AG04449 (cell line): ENCODE measurements at regions of chr11 and their contacts with region 1.

Region 1: GRCh38 chr11:33857933-33858371 is 33.9 kb downstream of the LMO2 start:
- DNase-seq: no peak
- H3K4me3 ChIP-seq: no peak overlapping the region
- CTCF ChIP-seq: peak; percentile 90

Region 2: DNA sequence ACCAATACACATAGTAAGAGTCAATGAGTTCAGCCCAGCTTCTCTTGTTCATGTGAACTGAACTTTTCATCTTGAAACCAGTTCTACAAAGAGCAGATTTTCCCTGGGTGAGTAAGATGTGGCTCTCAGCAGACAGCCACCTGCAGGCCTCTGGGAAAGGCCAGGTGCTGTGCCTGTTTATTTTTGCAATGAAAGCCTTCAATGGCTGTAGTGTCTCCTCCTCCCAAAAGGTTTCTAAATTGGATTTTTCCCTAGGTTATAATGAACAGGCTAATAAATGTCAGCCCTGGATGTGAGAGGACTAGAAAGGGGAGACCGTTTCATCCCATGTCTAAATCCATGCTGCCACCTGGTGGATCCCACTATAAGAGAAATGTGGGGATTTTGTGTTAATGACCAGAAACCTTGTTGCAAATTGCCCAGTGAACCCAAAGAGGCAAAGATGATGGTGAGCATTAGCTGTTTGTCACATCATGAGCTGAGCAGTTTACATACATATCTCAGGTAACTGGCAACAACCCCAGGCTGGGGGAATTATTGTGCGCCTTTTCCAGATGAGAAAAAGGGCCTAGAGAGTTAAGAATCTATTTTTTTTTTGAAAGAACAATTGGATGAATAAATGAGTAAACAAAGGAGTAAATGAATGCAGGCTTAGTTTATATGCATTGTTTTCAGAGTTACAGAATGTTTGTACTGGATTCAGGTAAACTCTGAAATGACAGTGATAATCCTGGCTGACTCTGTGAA is 170.0 kb before region 1 on chr11:
- CTCF ChIA-PET with region 1: no interaction called
- POLR2A ChIA-PET with region 1: no interaction called
- DNase-seq: no peak
- H3K4me3 ChIP-seq: no peak overlapping the region
- CTCF ChIP-seq: peak; percentile 63

Region 3: DNA sequence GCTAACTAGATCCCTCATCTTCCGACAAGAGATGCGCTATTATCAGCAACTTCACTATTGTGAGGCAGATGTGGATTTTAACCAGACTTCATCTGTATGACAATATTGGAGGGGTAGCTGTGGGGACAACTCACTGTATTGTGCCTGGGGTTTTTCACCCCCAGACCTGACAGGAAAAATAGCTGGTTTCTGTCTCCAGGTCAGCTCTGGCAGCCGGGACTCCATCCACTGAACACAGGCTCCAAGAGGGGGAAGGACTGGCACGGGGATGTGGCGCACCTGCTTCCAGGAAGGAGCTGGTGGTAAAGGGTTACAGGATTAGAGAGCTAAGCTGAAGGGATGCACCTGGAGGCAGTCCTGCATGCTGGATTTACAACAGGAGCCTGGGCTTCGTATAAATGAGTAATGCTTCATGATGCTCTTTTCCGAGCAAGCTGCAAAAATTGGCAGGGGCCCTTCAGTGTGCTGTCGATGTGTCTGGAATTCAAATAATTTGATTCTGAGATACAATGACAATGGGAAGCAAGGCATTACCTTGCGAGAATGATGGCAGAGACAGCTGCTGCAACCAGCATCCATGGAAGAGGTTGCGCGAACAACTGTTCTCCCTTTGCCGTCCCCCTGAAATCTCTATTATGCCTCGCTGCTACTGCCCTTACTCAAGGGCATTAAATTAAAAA is 15.6 kb before region 1 on chr11:
- CTCF ChIA-PET with region 1: interaction called, 23 read pairs
- POLR2A ChIA-PET with region 1: no interaction called
- DNase-seq: no peak
- H3K4me3 ChIP-seq: no peak overlapping the region
- CTCF ChIP-seq: no peak

Region 4: DNA sequence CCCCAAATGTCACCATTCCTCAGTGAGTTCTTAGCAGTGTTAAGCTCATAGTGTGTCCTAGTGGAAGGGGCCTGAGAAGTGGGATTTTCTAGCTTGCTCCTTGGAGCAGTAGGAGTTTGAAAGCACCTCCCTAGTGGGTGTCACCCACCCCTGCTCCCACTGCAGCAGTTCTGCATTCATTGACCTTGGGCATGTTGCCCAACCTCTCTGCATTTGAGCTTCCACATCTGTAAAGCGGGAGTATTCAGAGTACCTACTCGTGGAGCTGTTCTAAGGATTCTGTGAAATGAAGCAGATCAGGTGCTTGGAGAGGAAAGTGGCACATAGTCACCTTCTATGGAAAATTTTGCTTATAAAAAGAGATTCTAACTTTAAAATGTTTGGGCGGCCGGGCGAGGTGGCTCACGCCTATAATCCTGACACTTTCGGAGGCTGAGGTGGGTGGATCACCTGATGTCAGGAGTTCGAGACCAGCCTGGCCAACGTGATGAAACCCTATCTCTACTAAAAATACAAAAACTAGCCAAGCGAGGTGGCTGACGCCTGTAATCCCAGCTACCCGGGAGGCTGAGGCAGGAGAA is 17.0 kb after region 1 on chr11:
- CTCF ChIA-PET with region 1: interaction called, 18 read pairs
- POLR2A ChIA-PET with region 1: no interaction called
- DNase-seq: no peak
- H3K4me3 ChIP-seq: no peak overlapping the region
- CTCF ChIP-seq: no peak

Region 5: DNA sequence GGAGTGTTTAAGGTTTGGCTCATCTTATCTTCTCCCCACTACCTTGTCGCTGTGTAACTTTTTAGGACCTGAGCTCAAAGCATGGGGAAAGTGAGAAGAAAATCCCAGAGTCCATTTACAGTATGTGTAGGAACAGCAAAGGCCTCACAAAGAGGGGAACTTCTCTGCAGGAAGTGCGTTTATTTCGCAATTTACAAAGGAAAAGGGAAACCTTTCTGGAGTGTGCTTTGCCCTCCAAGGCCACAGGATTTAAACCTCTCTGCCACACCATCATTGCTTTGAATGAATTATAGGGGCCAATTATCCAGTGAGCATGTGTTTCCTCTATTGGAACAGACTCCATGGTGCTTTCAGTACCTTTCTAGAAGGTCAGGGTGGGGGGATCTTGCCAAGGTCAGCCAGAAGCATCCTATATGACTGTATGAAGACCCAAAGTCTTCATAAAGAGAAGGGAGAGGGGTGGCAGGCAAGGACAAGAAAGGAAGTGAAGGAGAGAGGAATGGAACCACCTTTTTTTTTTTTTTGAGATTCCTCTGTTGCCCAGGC is 102.0 kb after region 1 on chr11:
- CTCF ChIA-PET with region 1: interaction called, 261 read pairs
- POLR2A ChIA-PET with region 1: no interaction called
- DNase-seq: no peak
- H3K4me3 ChIP-seq: no peak overlapping the region
- CTCF ChIP-seq: no peak

Region 6: GRCh38 chr11:33976495-33977199 is 118.7 kb after region 1 on chr11:
- CTCF ChIA-PET with region 1: interaction called, 261 read pairs
- POLR2A ChIA-PET with region 1: no interaction called
- DNase-seq: peak; percentile 41
- H3K4me3 ChIP-seq: no peak overlapping the region
- CTCF ChIP-seq: no peak

Region 7: GRCh38 chr11:33987975-33988580 is 130.1 kb after region 1 on chr11:
- CTCF ChIA-PET with region 1: interaction called, 50 read pairs
- POLR2A ChIA-PET with region 1: no interaction called
- DNase-seq: no peak
- H3K4me3 ChIP-seq: no peak overlapping the region
- CTCF ChIP-seq: peak; percentile 76